Activated naive CD4-positive, alpha-beta T cell treated with anti-CD3 and anti-CD28 coated beads for 36 hours (primary cell): ENCODE measurements at regions of chrX and their contacts with region 1.

Region 1: GRCh38 chrX:136674270-136674985 is 26.5 kb downstream of the CD40LG start:
- DNase-seq: no peak
- H3K4me3 Mint-ChIP-seq: peak overlapping the region; percentile 21
- H3K27ac Mint-ChIP-seq: peak overlapping the region; percentile 82
- H3K4me1 Mint-ChIP-seq: peaks cover 91% of the 10 kb centered on the region
- H3K27me3 Mint-ChIP-seq: no peaks in the 10 kb centered on the region

Region 2: GRCh38 chrX:136525738-136526606 is 148.5 kb before region 1 on chrX:
- CTCF ChIA-PET with region 1: no interaction called
- intact Hi-C with region 1: no loop called
- DNase-seq: peak; percentile 22
- H3K4me3 Mint-ChIP-seq: no peak overlapping the region
- H3K27ac Mint-ChIP-seq: no peak overlapping the region
- H3K4me1 Mint-ChIP-seq: peaks cover 12% of the 10 kb centered on the region
- H3K27me3 Mint-ChIP-seq: no peaks in the 10 kb centered on the region

Region 3: DNA sequence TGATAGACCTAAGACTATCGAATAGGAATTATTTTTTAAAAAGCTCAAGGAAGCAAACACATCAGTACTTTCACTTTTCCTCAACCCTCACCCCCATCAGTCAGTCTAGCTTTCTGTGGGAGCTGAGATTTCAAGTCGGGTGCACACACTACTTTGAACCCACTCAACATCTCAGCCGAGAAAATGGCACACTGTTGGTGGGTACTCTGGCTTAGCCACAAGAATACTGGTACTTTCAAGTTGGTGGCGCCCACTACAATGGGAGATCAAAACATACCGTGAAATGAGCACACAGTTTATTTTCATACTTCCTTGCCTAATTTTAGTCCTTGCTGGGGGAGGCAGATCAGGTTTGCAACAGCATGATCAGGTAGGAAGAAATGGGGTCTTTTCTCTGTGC is 16.3 kb before region 1 on chrX:
- CTCF ChIA-PET with region 1: interaction called, 6 read pairs
- intact Hi-C with region 1: loop called (anchors 1 kb)
- DNase-seq: peak; percentile 34
- H3K4me3 Mint-ChIP-seq: peak overlapping the region; percentile 96
- H3K27ac Mint-ChIP-seq: peak overlapping the region; percentile 100
- H3K4me1 Mint-ChIP-seq: peaks cover 74% of the 10 kb centered on the region
- H3K27me3 Mint-ChIP-seq: no peaks in the 10 kb centered on the region

Region 4: DNA sequence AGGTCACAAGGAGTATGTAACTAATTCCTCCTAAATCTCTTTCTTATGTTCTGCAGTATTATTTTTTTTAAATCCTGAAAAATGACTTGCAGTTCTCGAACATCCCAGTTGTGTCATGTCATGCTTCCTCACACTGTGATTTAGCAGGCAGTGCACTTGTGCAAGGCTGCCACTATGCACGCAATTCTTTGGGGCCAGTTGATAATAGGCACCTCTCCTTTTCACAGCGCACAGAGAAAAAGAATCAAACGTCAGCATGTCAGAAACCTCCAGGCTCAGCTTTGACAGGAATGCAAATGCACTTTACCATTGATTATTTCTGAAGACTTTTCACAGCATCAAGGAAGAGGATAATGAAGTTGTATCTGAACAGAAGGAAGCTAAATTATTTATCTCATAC is 1974.1 kb after region 1 on chrX:
- CTCF ChIA-PET with region 1: no interaction called
- intact Hi-C with region 1: no loop called
- DNase-seq: no peak
- H3K4me3 Mint-ChIP-seq: no peak overlapping the region
- H3K27ac Mint-ChIP-seq: no peak overlapping the region
- H3K4me1 Mint-ChIP-seq: no peaks in the 10 kb centered on the region
- H3K27me3 Mint-ChIP-seq: no peaks in the 10 kb centered on the region